ENCODE measurements at regions of chr3 and their contacts with region 1.

Region 1: GRCh38 chr3:115040673-115041286 is 106.3 kb downstream of the ZBTB20 start:
- DNase-seq: peak; percentile 42
- H3K4me3 Mint-ChIP-seq: no peak overlapping the region
- H3K27ac Mint-ChIP-seq: no peak overlapping the region
- H3K4me1 Mint-ChIP-seq: no peaks in the 10 kb centered on the region
- H3K27me3 Mint-ChIP-seq: no peaks in the 10 kb centered on the region
- CTCF ChIP-seq: no peak

Region 2: DNA sequence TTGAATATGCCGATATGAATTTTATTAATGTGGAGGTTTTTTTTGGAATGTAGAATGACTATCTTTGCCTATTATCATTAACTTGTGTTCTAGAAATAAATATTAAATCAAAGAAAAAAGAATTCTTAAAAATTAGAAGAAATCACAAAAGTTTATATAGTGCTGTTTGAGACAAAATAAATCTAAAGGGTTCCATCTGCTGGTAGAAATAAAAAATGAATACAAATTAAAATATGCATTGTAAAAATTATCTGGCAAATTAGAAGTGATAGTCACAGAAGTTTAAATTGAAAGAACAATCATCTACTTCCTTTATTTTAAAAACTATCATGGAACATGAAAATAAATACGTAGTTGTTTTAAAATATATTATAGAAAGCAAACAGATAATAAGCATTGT is 129.0 kb after region 1 on chr3:
- CTCF ChIA-PET with region 1: no interaction called
- intact Hi-C with region 1: loop called (anchors 5 kb)
- DNase-seq: no peak
- H3K4me3 Mint-ChIP-seq: no peak overlapping the region
- H3K27ac Mint-ChIP-seq: no peak overlapping the region
- H3K4me1 Mint-ChIP-seq: no peaks in the 10 kb centered on the region
- H3K27me3 Mint-ChIP-seq: no peaks in the 10 kb centered on the region
- CTCF ChIP-seq: no peak